OCI-LY7 (cell line): ENCODE measurements at regions of chr22 and their contacts with region 1.

Region 1: DNA sequence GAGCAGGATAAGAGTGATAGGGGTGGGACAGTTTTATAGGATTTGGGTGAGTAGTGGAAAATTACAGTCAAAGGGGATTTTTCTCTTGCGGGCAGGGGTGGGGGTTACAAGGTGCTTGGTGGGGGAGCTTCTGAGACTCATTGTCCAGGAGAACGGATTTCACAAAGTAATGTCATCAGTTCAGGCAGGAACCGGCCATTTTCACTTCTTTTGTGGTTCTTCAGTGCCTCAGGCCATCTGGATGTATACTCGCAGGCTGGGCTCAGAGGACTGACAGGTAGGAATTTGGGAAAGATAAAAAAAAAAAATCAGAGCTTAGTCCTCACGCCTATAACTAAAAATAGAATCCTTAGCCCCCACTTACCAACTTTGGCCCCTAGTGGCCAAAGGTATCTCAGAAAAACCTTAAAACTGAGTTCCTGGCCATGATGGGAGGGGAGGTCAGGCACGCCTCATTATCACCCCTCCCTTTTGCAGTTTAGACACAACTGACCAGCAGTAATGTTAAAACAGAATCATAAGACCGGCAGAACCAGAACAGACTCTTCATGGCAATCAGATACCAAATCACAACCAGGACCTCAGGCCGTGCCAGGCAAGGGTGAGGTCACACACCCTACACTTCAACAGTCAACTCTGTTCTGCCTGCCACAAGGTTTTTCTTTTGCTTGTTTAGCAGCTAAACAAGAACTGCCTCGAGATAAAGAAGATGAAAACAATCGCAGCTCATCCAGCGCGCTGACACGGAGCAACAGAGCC is 8.9 kb upstream of the APOBEC3G start:
- DNase-seq: peak; percentile 36
- H3K4me3 ChIP-seq: peak overlapping the region; percentile 59
- H3K27ac ChIP-seq: peak overlapping the region; percentile 96
- H3K4me1 ChIP-seq: peaks cover 93% of the 10 kb centered on the region
- CTCF ChIP-seq: peak; percentile 70

Region 2: GRCh38 chr22:39013942-39014722 is 54.1 kb before region 1 on chr22 and contains the start of gene APOBEC3C:
- CTCF ChIA-PET with region 1: interaction called, 3 read pairs
- POLR2A ChIA-PET with region 1: no interaction called
- intact Hi-C with region 1: loop called (anchors 5 kb)
- DNase-seq: peak; percentile 70
- H3K4me3 ChIP-seq: peak within 1 kb of the TSS; percentile 61
- H3K27ac ChIP-seq: peak within 1 kb of the TSS; percentile 56
- H3K4me1 ChIP-seq: peaks cover 34% of the 10 kb centered on the region
- CTCF ChIP-seq: no peak
- total RNA-seq, gene APOBEC3C: 4.1 and 4.3 TPM in 2 replicates